ENCODE measurements at regions of chr2 and their contacts with region 1.

Region 1: DNA sequence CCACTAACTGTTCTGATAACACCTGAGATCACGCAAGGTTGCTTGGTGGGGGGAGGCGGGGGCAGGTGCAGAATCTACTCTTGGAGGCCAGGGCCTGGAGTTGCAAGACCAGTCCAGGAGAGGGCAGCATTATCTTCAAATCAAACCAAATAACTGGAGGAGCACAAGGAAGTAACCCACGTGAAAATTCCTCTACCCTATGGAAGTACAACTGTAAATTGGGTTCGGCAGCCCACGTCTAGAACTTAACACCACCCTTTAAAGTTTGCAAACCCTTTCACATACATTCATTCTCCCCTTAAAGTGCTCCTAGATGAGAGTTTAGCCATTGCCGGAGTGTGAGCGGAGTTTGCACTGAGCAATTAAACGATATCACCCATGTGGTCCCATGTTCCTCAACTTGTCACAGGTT is 19.6 kb upstream of the CXCR1 start:
- DNase-seq: peak; percentile 76
- H3K4me3 ChIP-seq: no peak overlapping the region
- H3K27ac ChIP-seq: peak overlapping the region in 3 of 4 donors; percentile 66 to 81 (median 79)
- H3K4me1 ChIP-seq: peaks cover 0 to 29% (median 23%) of the 10 kb centered on the region in 4 donors
- H3K27me3 ChIP-seq: no peaks in the 10 kb centered on the region
- CTCF ChIP-seq: peak; percentile 47 to 85 (median 84)
- EP300 ChIP-seq: no peak
- POLR2A ChIP-seq: no peak

Region 2: GRCh38 chr2:217301142-217301925 is 885.0 kb before region 1 on chr2:
- intact Hi-C with region 1: no loop called
- DNase-seq: peak; percentile 66
- H3K4me3 ChIP-seq: no peak overlapping the region
- H3K27ac ChIP-seq: peak overlapping the region in 1 of 4 donors; percentile 16
- H3K4me1 ChIP-seq: peaks cover 0 to 21% (median 4%) of the 10 kb centered on the region in 4 donors
- H3K27me3 ChIP-seq: no peaks in the 10 kb centered on the region
- CTCF ChIP-seq: no peak
- EP300 ChIP-seq: no peak
- POLR2A ChIP-seq: no peak

Region 3: GRCh38 chr2:218216674-218217359 is 30.5 kb after region 1 on chr2 and contains the start of gene ARPC2:
- intact Hi-C with region 1: loop called (anchors 1 kb)
- DNase-seq: peak; percentile 97
- H3K4me3 ChIP-seq: peak within 1 kb of the TSS; percentile 67 to 99 (median 86)
- H3K27ac ChIP-seq: peak within 1 kb of the TSS; percentile 91 to 97 (median 94)
- H3K4me1 ChIP-seq: peaks cover 0 to 47% (median 41%) of the 10 kb centered on the region in 4 donors
- H3K27me3 ChIP-seq: no peaks in the 10 kb centered on the region
- CTCF ChIP-seq: peak in 3 of 4 experiments; percentile 23 to 54 (median 43)
- EP300 ChIP-seq: peak in 1 of 4 donors; percentile 30
- POLR2A ChIP-seq: peak; percentile 88 to 92
- total RNA-seq, gene ARPC2: 235 to 267 (median 258) TPM

Measured in sigmoid colon (tissue), 7 donors.